CD8-positive, alpha-beta T cell (primary cell): ENCODE measurements at regions of chr17 and their contacts with region 1.

Region 1: GRCh38 chr17:20234276-20234675 is 225.1 kb downstream of the SPECC1 start:
- DNase-seq: peak in 8 of 9 experiments; percentile 17 to 68 (median 44)
- ATAC-seq: peak; percentile 85
- H3K4me3 ChIP-seq: no peak overlapping the region
- H3K4me3 Mint-ChIP-seq: peak overlapping the region; percentile 30
- H3K27ac ChIP-seq: no peak overlapping the region
- H3K27ac Mint-ChIP-seq: peak overlapping the region; percentile 89
- H3K4me1 ChIP-seq: peaks cover 29% of the 10 kb centered on the region
- H3K4me1 Mint-ChIP-seq: peaks cover 33% of the 10 kb centered on the region
- H3K27me3 ChIP-seq: no peaks in the 10 kb centered on the region
- H3K27me3 Mint-ChIP-seq: no peaks in the 10 kb centered on the region
- CTCF ChIP-seq: no peak

Region 2: DNA sequence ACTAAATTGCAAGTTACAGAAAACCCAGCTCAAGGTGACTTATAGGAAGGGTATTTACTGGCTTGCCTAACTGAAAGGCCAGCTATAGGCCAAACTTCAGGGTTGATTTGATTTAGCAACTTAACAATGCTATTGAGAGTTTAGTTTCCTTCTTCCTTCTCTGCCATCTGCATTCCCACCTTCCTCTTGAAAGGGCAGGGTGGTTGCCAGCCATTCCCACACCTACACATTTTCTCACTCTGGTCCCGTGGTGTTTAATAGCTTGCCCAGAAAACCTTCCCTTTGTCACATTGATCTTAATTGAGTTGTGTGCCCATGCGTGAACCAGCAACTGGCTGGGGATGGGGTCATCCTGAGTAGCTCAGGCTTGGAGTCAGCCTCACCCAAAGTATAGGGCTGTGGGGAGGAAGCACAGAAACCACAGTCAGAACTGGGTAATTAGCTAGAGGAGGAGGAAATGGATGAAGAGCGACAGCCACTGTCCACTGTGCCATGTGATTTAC is 30.5 kb before region 1 on chr17:
- CTCF ChIA-PET with region 1: no interaction called
- POLR2A ChIA-PET with region 1: no interaction called
- intact Hi-C with region 1: no loop called
- DNase-seq: no peak
- ATAC-seq: no peak
- H3K4me3 ChIP-seq: no peak overlapping the region
- H3K4me3 Mint-ChIP-seq: no peak overlapping the region
- H3K27ac ChIP-seq: no peak overlapping the region
- H3K27ac Mint-ChIP-seq: no peak overlapping the region
- H3K4me1 ChIP-seq: peaks cover 6% of the 10 kb centered on the region
- H3K4me1 Mint-ChIP-seq: peaks cover 24% of the 10 kb centered on the region
- H3K27me3 ChIP-seq: no peaks in the 10 kb centered on the region
- H3K27me3 Mint-ChIP-seq: no peaks in the 10 kb centered on the region
- CTCF ChIP-seq: no peak

Region 3: GRCh38 chr17:20244671-20245070 is 10.4 kb after region 1 on chr17:
- CTCF ChIA-PET with region 1: interaction called, 12 read pairs
- POLR2A ChIA-PET with region 1: interaction called, 6 read pairs
- intact Hi-C with region 1: no loop called
- DNase-seq: no peak
- ATAC-seq: no peak
- H3K4me3 ChIP-seq: no peak overlapping the region
- H3K4me3 Mint-ChIP-seq: no peak overlapping the region
- H3K27ac ChIP-seq: no peak overlapping the region
- H3K27ac Mint-ChIP-seq: no peak overlapping the region
- H3K4me1 ChIP-seq: peaks cover 30% of the 10 kb centered on the region
- H3K4me1 Mint-ChIP-seq: peaks cover 33% of the 10 kb centered on the region
- H3K27me3 ChIP-seq: no peaks in the 10 kb centered on the region
- H3K27me3 Mint-ChIP-seq: no peaks in the 10 kb centered on the region
- CTCF ChIP-seq: no peak

Region 4: DNA sequence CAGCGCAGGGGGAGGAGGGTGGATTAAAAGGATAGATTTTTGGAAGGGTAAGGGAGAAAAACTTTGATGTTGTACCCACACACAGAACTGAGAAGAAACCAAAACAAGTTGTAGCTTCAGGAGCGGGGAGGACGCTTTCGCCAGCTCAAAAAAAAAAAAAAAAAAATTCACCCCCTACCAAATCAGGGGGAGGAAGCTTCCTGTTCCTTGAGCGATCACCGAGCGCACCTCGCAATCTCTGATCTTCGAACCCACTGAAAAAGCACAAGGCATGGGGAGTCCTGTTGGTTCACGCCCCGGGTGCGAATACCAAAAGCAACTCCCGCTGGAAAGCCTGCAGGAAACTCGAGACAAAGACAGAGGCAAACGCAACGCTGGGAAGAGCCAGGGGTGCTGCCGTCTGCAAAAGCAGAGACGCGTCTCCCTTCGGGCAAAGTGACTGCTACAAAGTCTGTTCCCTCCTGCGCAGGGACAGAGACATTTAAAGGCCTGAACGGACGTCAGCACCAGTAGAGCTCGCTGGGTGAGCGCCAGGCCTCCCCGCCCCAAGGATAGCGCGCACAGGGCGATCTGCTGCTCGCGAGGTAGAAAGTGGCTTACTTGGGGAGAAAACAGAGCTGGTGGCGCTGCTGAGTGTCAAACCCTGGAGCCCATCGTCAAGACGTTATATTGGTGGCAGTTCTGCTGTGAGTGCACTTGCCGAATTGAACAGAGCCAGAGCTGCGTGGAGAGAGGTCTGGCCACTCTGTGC is 618.1 kb after region 1 on chr17:
- CTCF ChIA-PET with region 1: no interaction called
- POLR2A ChIA-PET with region 1: no interaction called
- intact Hi-C with region 1: no loop called
- DNase-seq: peak in 2 of 9 experiments; percentile 18 to 33
- ATAC-seq: no peak
- H3K4me3 ChIP-seq: peak overlapping the region in 1 of 2 experiments; percentile 37
- H3K4me3 Mint-ChIP-seq: peak overlapping the region; percentile 61
- H3K27ac ChIP-seq: no peak overlapping the region
- H3K27ac Mint-ChIP-seq: no peak overlapping the region
- H3K4me1 ChIP-seq: no peaks in the 10 kb centered on the region
- H3K4me1 Mint-ChIP-seq: peaks cover 16% of the 10 kb centered on the region
- H3K27me3 ChIP-seq: peaks cover 0 to 3% of the 10 kb centered on the region in 2 experiments
- H3K27me3 Mint-ChIP-seq: peaks cover 49% of the 10 kb centered on the region
- CTCF ChIP-seq: no peak